ENCODE measurements at regions of chr4 and their contacts with region 1.

Region 1: GRCh38 chr4:48375651-48376293 is 34.4 kb downstream of the SLAIN2 start:
- DNase-seq: peak; percentile 90
- H3K4me3 ChIP-seq: peak overlapping the region in 1 of 3 experiments; percentile 17
- H3K27ac ChIP-seq: peak overlapping the region; percentile 22
- H3K4me1 ChIP-seq: peaks cover 13% of the 10 kb centered on the region
- H3K27me3 ChIP-seq: no peaks in the 10 kb centered on the region
- CTCF ChIP-seq: no peak
- POLR2A ChIP-seq: no peak

Region 2: DNA sequence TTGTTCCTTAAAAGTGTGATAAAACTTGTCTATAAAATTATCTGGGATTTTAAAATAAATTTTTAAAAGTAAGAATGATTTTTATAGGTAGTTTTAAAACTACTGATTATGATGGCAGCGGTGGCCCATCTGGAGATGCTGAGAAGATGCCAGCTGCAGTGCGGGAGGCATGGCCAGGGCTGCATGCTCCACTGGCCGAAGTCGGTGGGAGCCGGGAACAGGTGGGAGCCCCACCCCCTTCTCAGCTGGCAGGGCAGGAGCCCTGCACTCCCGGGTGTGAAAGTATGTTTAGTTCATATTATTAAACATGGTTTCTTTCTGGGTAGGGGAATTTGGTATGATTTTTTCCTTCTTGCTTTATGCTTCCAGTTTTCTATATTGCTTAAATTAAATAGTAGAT is 601.7 kb before region 1 on chr4:
- CTCF ChIA-PET with region 1: no interaction called
- POLR2A ChIA-PET with region 1: no interaction called
- dilution Hi-C with region 1: no loop called
- intact Hi-C with region 1: no loop called
- DNase-seq: no peak
- H3K4me3 ChIP-seq: no peak overlapping the region
- H3K27ac ChIP-seq: no peak overlapping the region
- H3K4me1 ChIP-seq: no peaks in the 10 kb centered on the region
- H3K27me3 ChIP-seq: peaks cover 3 to 21% of the 10 kb centered on the region in 2 experiments
- CTCF ChIP-seq: no peak
- POLR2A ChIP-seq: no peak

Region 3: GRCh38 chr4:48388525-48389154 is 12.9 kb after region 1 on chr4:
- CTCF ChIA-PET with region 1: interaction called, 22 read pairs
- POLR2A ChIA-PET with region 1: no interaction called
- dilution Hi-C with region 1: no loop called
- intact Hi-C with region 1: no loop called
- DNase-seq: no peak
- H3K4me3 ChIP-seq: no peak overlapping the region
- H3K27ac ChIP-seq: no peak overlapping the region
- H3K4me1 ChIP-seq: no peaks in the 10 kb centered on the region
- H3K27me3 ChIP-seq: no peaks in the 10 kb centered on the region
- CTCF ChIP-seq: no peak
- POLR2A ChIP-seq: no peak

Region 4: DNA sequence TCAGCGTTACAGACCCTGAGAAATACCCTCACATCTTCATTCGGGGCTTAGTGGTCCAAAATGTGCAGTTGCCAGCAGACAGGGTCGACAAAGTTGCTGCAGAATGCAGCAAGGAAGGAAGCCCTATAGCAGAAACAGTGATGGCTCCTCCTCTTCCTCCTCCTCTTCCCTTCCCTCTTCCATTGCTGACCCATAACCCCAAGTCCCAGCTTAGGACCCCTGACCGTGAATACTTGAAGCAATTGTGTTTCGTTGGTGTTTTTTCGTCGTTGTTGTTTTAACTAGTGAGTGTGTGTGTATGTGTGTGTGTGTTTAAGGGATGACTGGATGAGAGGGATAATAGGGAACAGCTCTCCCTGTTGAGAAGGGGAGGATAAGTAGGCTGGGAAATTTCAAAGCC is 35.0 kb after region 1 on chr4:
- CTCF ChIA-PET with region 1: interaction called, 3 read pairs
- POLR2A ChIA-PET with region 1: no interaction called
- dilution Hi-C with region 1: no loop called
- intact Hi-C with region 1: loop called (anchors 5 kb)
- DNase-seq: no peak
- H3K4me3 ChIP-seq: no peak overlapping the region
- H3K27ac ChIP-seq: no peak overlapping the region
- H3K4me1 ChIP-seq: no peaks in the 10 kb centered on the region
- H3K27me3 ChIP-seq: no peaks in the 10 kb centered on the region
- CTCF ChIP-seq: no peak
- POLR2A ChIP-seq: no peak